ENCODE measurements at regions of chr15 and their contacts with region 1.

Region 1: GRCh38 chr15:55775316-55775715 is 32.4 kb upstream of the PRTG start:
- DNase-seq: no peak
- ATAC-seq: no peak
- H3K4me3 Mint-ChIP-seq: no peak overlapping the region
- H3K27ac Mint-ChIP-seq: no peak overlapping the region
- H3K4me1 Mint-ChIP-seq: no peaks in the 10 kb centered on the region
- H3K27me3 Mint-ChIP-seq: peaks cover 18% of the 10 kb centered on the region
- CTCF ChIP-seq: no peak

Region 2: GRCh38 chr15:55514414-55514850 is 260.9 kb before region 1 on chr15:
- CTCF ChIA-PET with region 1: no interaction called
- POLR2A ChIA-PET with region 1: no interaction called
- intact Hi-C with region 1: no loop called
- DNase-seq: no peak
- ATAC-seq: no peak
- H3K4me3 Mint-ChIP-seq: no peak overlapping the region
- H3K27ac Mint-ChIP-seq: no peak overlapping the region
- H3K4me1 Mint-ChIP-seq: peaks cover 2% of the 10 kb centered on the region
- H3K27me3 Mint-ChIP-seq: no peaks in the 10 kb centered on the region
- CTCF ChIP-seq: no peak

Region 3: DNA sequence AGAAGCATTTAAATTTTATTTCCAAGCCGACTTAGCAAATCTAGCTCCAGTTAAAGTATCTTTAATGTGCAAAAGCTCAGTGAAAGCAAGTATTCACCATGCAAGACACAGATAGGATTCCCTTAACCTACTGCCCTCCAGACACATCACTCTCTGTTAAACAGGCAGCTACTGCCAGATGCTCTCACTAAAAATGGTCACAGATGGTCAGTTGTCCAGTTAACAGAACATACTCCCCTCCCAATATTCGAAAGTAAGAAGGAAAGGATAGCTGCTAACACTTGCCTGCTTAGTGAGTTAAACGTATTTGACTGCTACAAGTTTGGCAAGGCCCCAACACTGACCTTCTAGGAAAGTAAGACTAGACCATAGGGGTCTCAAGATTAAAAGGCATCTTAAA is 106.0 kb before region 1 on chr15:
- CTCF ChIA-PET with region 1: interaction called, 15 read pairs
- POLR2A ChIA-PET with region 1: no interaction called
- intact Hi-C with region 1: no loop called
- DNase-seq: no peak
- ATAC-seq: no peak
- H3K4me3 Mint-ChIP-seq: no peak overlapping the region
- H3K27ac Mint-ChIP-seq: no peak overlapping the region
- H3K4me1 Mint-ChIP-seq: no peaks in the 10 kb centered on the region
- H3K27me3 Mint-ChIP-seq: peaks cover 5% of the 10 kb centered on the region
- CTCF ChIP-seq: no peak

Region 4: GRCh38 chr15:55742927-55743728 is 32.2 kb before region 1 on chr15 and contains the start of gene PRTG:
- CTCF ChIA-PET with region 1: interaction called, 11 read pairs
- POLR2A ChIA-PET with region 1: no interaction called
- intact Hi-C with region 1: no loop called
- DNase-seq: no peak
- ATAC-seq: no peak
- H3K4me3 Mint-ChIP-seq: peak within 1 kb of the TSS; percentile 58
- H3K27ac Mint-ChIP-seq: no peak within 1 kb of the TSS
- H3K4me1 Mint-ChIP-seq: no peaks in the 10 kb centered on the region
- H3K27me3 Mint-ChIP-seq: peaks cover 26% of the 10 kb centered on the region
- CTCF ChIP-seq: no peak
- total RNA-seq, gene PRTG: not detected

Region 5: DNA sequence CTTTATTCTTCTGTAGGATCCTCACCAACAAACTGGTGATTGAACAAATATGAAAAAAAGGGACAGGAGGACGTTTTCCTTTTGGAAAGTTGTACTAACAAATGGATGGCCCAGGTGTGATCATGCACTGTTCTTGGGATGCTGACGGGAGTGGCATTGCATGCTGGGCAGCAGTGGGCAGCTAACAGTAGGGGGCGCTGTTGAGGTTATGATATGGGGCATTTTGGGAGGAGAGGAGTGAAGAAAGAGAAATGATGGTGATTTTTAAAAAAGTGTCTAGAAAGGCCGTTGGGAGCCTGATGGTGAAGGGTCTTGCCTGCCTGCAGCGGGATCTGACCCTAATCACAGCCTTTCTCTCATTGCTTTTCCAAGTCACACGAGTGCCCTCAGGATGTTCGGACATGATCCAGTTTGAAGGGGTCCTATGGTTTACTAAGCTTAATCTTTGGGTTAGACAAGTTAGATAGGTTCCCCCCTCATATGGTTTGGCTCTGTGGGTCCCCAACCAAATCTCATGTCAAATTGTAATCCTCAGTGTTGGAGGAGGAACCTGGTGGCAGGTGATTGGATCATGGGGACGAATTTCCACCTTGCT is 13.8 kb after region 1 on chr15:
- CTCF ChIA-PET with region 1: interaction called, 13 read pairs
- POLR2A ChIA-PET with region 1: no interaction called
- intact Hi-C with region 1: no loop called
- DNase-seq: peak; percentile 71
- ATAC-seq: peak; percentile 39
- H3K4me3 Mint-ChIP-seq: no peak overlapping the region
- H3K27ac Mint-ChIP-seq: no peak overlapping the region
- H3K4me1 Mint-ChIP-seq: no peaks in the 10 kb centered on the region
- H3K27me3 Mint-ChIP-seq: peaks cover 2% of the 10 kb centered on the region
- CTCF ChIP-seq: peak; percentile 75